ENCODE measurements at regions of chr16 and their contacts with region 1.

Region 1: GRCh38 chr16:87778830-87779579 is 13.2 kb upstream of the KLHDC4 start:
- DNase-seq: peak; percentile 95
- H3K4me3 ChIP-seq: no peak overlapping the region
- H3K27ac ChIP-seq: peak overlapping the region; percentile 79
- H3K4me1 ChIP-seq: peaks cover 22% of the 10 kb centered on the region
- H3K27me3 ChIP-seq: no peaks in the 10 kb centered on the region
- CTCF ChIP-seq: peak; percentile 85 to 99
- POLR2A ChIP-seq: no peak

Region 2: DNA sequence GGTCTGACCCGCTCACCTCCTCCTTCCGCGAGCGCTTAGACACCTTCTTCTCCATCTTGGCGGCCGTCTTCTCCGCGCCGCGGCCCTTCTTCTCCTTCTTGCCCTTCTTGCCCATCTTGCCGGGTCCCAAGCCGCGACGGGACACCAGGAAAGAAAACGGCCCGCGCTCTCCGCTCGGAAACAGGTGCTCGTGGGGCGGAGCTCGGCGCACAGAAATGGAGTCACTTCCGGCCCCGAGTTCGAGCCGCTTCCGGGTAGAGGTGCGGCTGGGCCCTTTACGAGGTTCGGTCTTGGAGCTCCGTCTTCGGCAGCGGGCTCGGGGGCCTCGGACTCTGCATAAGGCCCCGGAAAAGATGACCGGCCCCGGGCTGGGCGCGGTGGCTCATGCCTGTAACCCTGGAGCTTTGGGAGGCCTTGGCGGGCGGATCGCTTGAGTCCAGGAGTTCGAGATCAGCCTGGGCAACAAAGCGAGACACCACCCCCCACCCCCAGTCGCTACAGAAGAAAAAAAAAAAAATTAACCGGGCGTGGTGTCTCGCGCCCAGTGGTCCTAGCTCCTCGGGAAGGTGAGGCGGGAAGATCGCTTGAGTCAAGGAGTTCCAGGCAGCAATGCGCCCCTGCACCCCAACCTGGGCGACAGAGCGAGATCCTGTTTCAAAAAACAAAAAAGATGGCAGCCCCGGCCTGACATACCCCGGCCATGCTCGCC is 13.1 kb before region 1 on chr16 and contains the start of gene KLHDC4:
- CTCF ChIA-PET with region 1: interaction called, 26 read pairs
- POLR2A ChIA-PET with region 1: interaction called, 3 read pairs
- dilution Hi-C with region 1: no loop called
- intact Hi-C with region 1: no loop called
- DNase-seq: peak; percentile 86
- H3K4me3 ChIP-seq: peak within 1 kb of the TSS; percentile 55 to 82 (median 78)
- H3K27ac ChIP-seq: peak within 1 kb of the TSS; percentile 92
- H3K4me1 ChIP-seq: peaks cover 8% of the 10 kb centered on the region
- H3K27me3 ChIP-seq: no peaks in the 10 kb centered on the region
- CTCF ChIP-seq: no peak
- POLR2A ChIP-seq: peak; percentile 87
- total RNA-seq, gene KLHDC4: 46.2 and 46.7 TPM in 2 replicates

Region 3: DNA sequence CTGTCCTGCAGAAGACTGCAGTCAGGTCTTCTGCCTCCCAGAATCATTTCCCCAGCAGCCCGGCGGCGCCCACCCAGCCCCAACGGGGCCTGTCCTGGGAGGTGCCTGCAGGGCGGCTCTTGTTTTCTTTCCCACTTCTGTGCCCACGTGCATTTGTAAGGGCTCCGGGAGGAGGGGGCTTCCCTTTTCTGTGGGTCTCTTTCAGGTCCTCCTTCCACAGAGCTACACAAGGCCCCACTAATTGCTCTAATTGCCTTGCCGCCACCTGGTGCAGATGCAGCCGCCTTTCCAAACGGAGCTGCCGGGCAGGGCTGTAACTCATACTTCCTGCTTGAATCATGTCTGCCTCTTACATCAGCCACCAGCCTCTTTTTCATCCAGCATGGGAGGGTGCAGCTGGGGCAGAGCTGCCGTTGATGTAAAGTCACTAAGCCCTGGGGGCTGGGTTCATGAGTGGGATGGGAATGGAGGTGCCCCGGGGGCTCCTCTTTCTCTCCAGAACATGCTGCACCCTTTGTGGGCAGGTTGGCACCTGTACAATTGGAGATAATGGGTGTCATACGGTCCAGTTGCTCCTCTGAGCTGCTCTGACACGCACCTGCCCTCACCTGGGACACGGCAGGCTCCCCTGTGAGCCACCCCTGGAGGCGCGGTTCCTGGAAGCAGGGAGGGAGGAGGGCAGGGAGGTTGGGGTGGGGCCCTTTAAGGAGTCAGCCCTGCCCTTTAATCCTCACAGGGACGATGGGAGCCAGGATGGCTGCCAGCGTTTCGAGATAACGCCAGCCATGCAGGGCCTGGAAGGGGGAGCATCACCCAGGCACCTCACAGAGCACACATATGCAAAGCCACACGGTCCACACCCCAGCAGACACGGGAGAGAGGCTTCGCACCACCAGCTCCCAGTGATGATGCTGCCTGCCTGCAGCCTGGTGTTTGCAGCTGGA is 27.9 kb after region 1 on chr16:
- CTCF ChIA-PET with region 1: interaction called, 32 read pairs
- POLR2A ChIA-PET with region 1: interaction called, 4 read pairs
- dilution Hi-C with region 1: no loop called
- intact Hi-C with region 1: loop called (anchors 2 kb)
- DNase-seq: peak; percentile 66
- H3K4me3 ChIP-seq: no peak overlapping the region
- H3K27ac ChIP-seq: no peak overlapping the region
- H3K4me1 ChIP-seq: peaks cover 6% of the 10 kb centered on the region
- H3K27me3 ChIP-seq: no peaks in the 10 kb centered on the region
- CTCF ChIP-seq: no peak
- POLR2A ChIP-seq: no peak

Region 4: DNA sequence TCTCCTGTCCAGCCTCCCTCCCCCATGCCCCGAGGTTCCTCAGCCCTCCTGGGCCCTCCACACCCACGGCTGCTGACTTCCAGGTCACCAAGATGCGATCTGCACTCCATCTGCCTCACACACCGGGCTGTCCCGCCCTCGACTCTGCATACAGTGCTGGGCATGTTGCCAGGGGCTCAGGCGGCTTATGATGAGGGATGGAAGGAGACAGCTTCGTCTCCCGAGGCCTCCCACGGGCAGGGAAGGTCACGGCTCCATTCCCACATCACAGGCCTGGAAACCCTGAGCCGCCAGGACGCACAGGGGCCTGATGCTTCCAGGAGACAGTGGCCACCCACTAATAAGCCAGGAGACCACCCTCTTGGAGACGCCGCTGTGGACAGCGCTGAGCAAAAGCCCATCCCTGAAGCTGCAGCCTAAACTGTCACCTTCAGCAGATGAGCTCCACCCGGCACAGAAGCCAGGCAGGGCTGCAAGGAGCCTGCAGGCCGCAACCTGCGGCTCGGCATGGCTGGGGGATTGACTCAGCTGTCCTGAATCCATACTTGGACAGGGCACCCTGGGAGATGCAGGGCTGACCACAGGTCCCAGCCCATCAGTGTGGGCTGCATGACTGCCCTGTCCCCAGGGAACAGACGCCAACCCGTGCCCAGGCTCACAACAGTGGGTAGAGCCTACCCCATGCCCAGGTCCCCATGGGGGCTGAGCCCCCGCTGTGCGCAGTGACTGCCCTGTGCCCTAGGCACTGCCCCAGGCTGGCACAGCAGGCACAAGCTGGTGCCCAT is 55.8 kb after region 1 on chr16:
- CTCF ChIA-PET with region 1: interaction called, 177 read pairs
- POLR2A ChIA-PET with region 1: interaction called, 11 read pairs
- dilution Hi-C with region 1: no loop called
- intact Hi-C with region 1: loop called (anchors 1 kb)
- DNase-seq: no peak
- H3K4me3 ChIP-seq: no peak overlapping the region
- H3K27ac ChIP-seq: no peak overlapping the region
- H3K4me1 ChIP-seq: peaks cover 24% of the 10 kb centered on the region
- H3K27me3 ChIP-seq: no peaks in the 10 kb centered on the region
- CTCF ChIP-seq: no peak
- POLR2A ChIP-seq: no peak

Region 5: DNA sequence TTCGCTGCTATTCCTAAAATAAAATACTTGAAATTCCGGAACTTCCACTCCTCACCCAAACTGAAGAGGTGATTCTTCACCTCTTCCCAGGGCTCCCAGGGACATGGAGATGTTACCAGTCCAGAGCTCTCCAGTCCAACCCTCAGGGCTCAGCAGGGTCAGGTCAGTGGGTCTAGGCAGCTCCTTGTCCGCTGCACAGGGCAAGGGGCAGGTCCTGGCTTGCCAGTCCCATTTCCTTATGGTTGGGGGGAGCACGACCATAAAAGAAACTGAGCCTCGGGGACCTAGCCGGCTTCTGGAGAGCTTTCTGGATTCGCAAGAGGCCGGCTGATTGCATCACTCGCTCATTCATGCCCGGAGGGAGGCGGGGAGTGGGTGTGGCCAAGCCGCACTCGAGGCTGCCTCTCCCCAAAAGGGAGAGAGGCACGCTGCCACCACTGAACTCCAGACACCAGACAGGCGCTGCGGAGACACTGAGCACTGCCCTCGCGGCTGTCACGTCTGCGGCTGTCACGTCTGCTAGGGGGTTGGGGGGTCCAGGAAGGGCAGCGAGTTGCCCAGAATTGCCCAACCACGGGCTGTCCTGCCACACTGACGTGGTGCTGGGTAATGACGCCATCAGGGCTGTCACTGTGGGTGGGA is 74.5 kb after region 1 on chr16:
- CTCF ChIA-PET with region 1: interaction called, 74 read pairs
- POLR2A ChIA-PET with region 1: interaction called, 4 read pairs
- dilution Hi-C with region 1: no loop called
- intact Hi-C with region 1: loop called (anchors 5 kb)
- DNase-seq: peak; percentile 83
- H3K4me3 ChIP-seq: peak overlapping the region in 2 of 3 experiments; percentile 24 to 49
- H3K27ac ChIP-seq: peak overlapping the region; percentile 61
- H3K4me1 ChIP-seq: peaks cover 4% of the 10 kb centered on the region
- H3K27me3 ChIP-seq: no peaks in the 10 kb centered on the region
- CTCF ChIP-seq: no peak
- POLR2A ChIP-seq: no peak

Region 6: DNA sequence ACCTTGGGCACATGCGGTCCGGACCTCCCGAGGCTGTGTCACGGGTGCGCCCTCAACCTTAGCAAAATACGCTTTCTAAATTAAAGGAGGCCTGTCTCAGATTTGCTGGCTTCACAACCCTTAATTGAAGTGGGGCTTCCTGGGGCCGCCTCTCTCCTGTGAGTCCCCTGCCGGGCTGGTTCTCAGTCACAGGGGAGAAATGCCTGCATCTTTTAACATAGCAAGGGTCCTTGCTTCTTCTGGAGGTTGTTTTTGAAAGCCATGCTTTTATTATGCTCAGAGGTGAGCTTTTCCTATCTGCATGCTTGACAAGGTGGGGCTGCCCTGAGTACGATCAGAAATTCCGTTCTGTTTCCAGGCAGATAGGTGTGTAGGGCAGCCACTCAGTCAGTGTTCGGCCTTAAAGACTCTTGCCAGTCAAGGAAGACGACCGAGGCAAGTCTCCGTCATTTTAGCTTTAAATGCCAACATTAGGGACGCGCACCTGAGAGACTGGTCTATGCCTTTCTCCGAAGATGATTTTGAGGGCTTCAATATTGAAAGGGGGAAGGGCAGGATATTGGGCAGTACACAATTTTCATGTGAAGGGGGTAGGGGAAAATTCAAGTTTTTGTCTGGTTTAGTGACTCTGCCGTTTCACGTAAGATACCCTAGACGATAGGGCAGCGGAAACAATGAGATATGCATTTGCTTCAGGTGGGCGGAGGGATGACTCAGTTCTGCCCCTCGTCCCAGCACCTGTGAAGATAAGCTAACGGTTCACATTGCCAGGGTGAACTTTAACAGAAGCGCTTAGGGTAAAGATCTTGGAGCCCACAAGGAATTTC is 95.8 kb after region 1 on chr16:
- CTCF ChIA-PET with region 1: interaction called, 470 read pairs
- POLR2A ChIA-PET with region 1: interaction called, 26 read pairs
- dilution Hi-C with region 1: no loop called
- intact Hi-C with region 1: loop called (anchors 1 kb)
- DNase-seq: no peak
- H3K4me3 ChIP-seq: no peak overlapping the region
- H3K27ac ChIP-seq: no peak overlapping the region
- H3K4me1 ChIP-seq: no peaks in the 10 kb centered on the region
- H3K27me3 ChIP-seq: peaks cover 3 to 4% of the 10 kb centered on the region in 2 experiments
- CTCF ChIP-seq: no peak
- POLR2A ChIP-seq: no peak

Region 7: DNA sequence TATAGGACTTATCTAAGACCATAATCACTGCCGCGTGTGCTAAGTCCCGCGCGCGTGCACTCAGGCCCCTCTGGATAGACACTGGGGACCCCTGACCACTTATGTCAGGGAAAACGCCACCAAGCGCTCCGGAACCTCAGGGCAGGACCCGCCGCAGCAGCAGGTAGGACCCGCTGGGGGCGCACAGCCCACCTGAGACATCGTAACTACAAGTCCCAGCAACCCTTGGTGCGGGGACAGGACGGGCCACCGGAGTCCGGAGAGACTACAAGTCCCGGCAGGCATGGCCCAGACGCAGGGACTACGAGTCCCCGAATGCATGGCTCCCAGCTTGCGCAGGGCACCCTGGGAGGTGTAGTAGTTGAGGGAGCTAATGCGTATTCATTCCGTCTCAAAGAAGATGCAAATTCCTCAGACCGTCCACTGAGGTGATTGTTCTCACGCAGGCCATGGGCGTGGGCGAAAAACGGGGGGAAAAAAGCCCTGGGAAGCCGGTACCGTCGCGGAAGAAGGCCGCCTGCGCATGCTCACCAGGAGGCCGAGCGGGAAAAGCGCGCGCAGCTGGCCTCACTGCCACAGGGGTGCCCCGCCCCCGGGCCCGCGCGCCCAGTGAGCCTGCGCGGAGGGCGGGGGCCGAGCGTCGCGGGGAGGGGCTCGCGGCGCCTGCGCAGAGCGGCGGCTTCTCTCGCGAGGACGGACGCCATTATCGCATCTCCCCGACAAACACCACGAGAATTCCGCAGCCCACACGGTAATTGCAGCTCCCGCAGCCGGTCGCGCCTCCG is 172.0 kb after region 1 on chr16 and contains the start of gene BANP:
- CTCF ChIA-PET with region 1: interaction called, 8 read pairs
- POLR2A ChIA-PET with region 1: interaction called, 6 read pairs
- dilution Hi-C with region 1: no loop called
- intact Hi-C with region 1: loop called (anchors 5 kb)
- DNase-seq: peak; percentile 98
- H3K4me3 ChIP-seq: peak within 1 kb of the TSS; percentile 68 to 81 (median 73)
- H3K27ac ChIP-seq: peak within 1 kb of the TSS; percentile 87
- H3K4me1 ChIP-seq: peaks cover 27% of the 10 kb centered on the region
- H3K27me3 ChIP-seq: no peaks in the 10 kb centered on the region
- CTCF ChIP-seq: peak; percentile 41 to 59
- POLR2A ChIP-seq: no peak
- total RNA-seq, gene BANP: 33.2 and 33.8 TPM in 2 replicates

Measured in endothelial cell of umbilical vein (primary cell).